AG04450 (cell line): ENCODE measurements at regions of chr6 and their contacts with region 1.

Region 1: GRCh38 chr6:157184202-157185020 is 138.9 kb downstream of the TMEM242 start:
- DNase-seq: peak; percentile 15
- H3K4me3 ChIP-seq: no peak overlapping the region
- H3K27ac ChIP-seq: no peak overlapping the region
- H3K27me3 ChIP-seq: no peaks in the 10 kb centered on the region
- CTCF ChIP-seq: peak; percentile 94

Region 2: DNA sequence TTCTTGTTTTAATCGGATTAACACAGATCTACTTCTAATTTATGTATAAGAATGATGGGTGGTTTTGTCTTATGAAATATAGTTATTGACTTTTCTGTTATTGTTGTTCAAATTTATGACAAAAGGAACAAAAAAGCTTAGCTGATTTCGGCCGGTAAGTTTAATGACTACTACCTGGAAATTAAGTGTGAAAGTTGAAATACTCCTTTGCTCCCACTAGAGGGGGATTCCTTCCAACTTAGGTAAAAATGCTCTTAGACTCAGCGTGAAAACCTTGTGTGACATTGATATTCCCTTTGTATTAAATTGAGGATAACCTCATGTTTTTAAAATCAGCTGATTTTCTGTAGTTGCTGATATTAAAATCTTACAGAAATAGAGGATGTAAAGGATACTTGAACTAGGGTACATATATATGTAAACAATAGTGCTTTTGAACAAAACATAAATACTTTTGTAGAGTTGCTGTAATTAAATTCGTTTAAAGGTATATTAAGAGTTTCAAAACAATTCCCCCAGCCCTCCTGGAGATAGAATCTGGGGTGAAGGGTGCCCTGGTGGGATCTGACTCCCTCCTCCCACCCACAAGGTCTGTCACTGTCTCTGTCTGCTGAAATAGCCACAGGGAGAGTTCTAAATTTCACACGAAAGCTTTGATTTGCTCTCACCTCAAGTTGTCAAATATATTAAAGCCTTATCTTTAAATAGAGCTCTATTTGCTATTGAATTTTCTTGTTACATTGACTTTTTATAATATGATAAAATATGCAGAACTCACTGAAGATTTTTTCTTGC is 149.8 kb before region 1 on chr6:
- CTCF ChIA-PET with region 1: interaction called, 32 read pairs
- POLR2A ChIA-PET with region 1: no interaction called
- DNase-seq: no peak
- H3K4me3 ChIP-seq: no peak overlapping the region
- H3K27ac ChIP-seq: no peak overlapping the region
- H3K27me3 ChIP-seq: no peaks in the 10 kb centered on the region
- CTCF ChIP-seq: peak; percentile 79

Region 3: GRCh38 chr6:157194643-157195042 is 10.2 kb after region 1 on chr6:
- CTCF ChIA-PET with region 1: interaction called, 11 read pairs
- POLR2A ChIA-PET with region 1: no interaction called
- DNase-seq: no peak
- H3K4me3 ChIP-seq: no peak overlapping the region
- H3K27ac ChIP-seq: no peak overlapping the region
- H3K27me3 ChIP-seq: no peaks in the 10 kb centered on the region
- CTCF ChIP-seq: no peak

Region 4: GRCh38 chr6:157211603-157212455 is 27.4 kb after region 1 on chr6:
- CTCF ChIA-PET with region 1: no interaction called
- POLR2A ChIA-PET with region 1: no interaction called
- DNase-seq: no peak
- H3K4me3 ChIP-seq: no peak overlapping the region
- H3K27ac ChIP-seq: no peak overlapping the region
- H3K27me3 ChIP-seq: no peaks in the 10 kb centered on the region
- CTCF ChIP-seq: no peak

Region 5: GRCh38 chr6:157323255-157323965 is 139.0 kb after region 1 on chr6 and contains the start of gene TMEM242:
- CTCF ChIA-PET with region 1: no interaction called
- POLR2A ChIA-PET with region 1: no interaction called
- DNase-seq: peak; percentile 82
- H3K4me3 ChIP-seq: peak within 1 kb of the TSS; percentile 74
- H3K27ac ChIP-seq: peak within 1 kb of the TSS; percentile 85
- H3K27me3 ChIP-seq: no peaks in the 10 kb centered on the region
- CTCF ChIP-seq: peak; percentile 50
- polyA plus RNA-seq, gene TMEM242: 6.8 and 8.6 TPM in 2 replicates